ENCODE measurements at regions of chr5 and their contacts with region 1.

Region 1: DNA sequence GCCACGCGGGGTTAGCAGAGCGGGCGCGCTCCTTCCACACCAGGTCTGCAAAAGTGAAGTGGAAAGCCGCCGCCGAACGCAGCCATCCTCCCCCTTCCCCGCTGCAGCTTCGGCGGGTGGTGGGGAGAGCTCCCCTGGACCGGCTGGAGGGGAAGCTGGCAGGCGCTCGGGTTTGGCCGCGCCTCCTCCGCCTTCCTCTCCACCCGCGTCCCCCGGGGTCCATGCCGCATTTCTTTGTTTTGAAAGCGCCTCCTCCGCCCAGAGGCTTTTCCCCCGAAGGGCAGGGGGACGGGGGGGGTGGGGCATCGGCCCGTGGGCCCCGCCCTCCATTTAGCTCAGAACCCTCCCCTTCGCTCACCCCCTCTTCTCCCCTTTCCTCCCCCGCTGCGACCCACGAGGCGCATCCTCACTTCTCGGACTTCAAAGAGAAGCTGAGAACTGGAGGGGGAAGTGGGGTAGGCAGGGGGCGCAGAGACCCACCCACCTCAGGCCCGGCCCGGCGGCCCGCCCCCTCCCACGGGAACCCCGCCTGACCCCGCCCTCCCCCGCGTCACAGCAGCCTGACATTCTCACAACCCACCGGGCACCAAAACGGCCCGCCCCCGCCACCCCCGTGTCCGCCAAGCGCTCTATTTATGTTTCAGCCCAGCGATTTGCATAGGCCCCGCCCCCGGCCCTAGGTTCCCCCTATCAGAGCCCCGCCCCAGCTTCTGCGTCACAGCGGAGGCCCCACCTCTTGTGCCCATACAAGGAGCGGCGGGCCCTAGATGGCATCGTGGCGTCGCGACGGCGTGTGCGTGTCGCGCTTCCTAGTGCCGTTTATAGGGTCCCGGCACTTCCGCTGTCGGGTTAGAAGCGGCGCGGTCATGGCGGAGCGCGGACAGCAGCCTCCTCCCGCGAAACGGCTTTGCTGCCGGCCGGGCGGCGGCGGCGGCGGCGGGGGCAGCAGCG is at the start of gene ZSWIM6:
- DNase-seq: peak; percentile 98 to 100 (median 99)

Region 2: GRCh38 chr5:61139100-61139873 is 192.4 kb before region 1 on chr5:
- intact Hi-C with region 1: no loop called
- DNase-seq: no peak

Region 3: DNA sequence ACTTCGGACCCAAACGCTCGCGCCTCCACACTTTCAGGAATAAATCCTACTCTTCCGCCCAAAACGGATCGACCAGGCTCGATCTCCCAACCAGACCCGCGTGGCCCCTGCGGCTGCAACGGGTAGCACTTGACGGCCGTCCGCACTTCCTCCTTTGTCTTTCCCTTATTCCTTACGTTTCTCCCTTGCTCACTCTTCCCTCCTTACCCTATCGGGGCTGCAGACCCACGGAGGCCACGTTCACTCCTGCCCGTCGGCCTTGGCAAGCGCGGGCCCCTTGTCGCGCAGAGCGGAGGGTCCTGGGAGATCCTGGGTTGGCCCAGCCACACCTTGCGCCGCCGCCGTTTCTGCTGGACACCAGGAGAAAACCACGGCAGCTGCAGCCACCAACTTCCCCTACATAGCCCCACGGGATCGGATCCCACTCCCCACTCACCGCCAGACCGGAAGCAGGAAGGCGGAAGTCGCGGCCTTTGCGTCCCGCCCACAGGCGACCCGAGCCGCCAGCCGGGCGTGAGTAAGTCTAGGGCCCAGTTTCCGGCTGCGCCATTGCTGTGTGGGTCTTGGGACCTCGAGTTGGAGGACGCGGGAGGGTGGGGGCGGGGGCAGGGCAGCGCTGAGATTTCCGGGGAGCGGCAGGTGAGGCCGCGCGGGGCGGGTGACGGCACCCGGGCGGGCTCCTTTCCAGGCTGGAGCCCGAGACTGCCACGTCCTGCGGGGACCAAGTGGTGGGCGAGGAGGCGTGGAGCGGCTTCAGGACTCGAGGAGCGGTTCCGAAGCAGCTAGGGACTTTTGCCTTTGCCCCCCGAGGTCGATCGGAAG is 169.5 kb before region 1 on chr5 and contains the start of gene SMIM15:
- intact Hi-C with region 1: loop called (anchors 5 kb)
- DNase-seq: peak; percentile 75 to 98 (median 84)

Region 4: GRCh38 chr5:61171479-61171878 is 160.2 kb before region 1 on chr5:
- intact Hi-C with region 1: loop called (anchors 5 kb)
- DNase-seq: no peak

Region 5: DNA sequence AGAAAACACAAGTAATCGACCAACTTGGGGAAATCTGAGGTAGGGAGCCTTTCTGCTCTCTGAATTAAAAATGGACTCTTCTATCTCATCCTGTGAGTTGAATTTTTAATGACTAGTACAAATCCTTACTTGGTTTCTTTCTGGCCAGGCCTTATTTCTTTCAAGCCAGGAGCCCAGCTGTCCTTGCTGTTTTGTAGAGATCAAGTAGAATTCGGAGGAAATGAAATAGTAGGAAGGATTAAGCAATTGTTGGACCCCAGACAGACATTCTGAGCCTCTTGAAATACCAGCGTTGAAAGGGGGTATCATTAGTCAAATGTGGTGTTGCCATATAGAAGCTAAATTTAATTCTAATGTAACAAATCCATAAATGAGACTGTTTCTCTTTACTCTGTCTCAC is 115.7 kb before region 1 on chr5:
- intact Hi-C with region 1: no loop called
- DNase-seq: no peak

Region 6: DNA sequence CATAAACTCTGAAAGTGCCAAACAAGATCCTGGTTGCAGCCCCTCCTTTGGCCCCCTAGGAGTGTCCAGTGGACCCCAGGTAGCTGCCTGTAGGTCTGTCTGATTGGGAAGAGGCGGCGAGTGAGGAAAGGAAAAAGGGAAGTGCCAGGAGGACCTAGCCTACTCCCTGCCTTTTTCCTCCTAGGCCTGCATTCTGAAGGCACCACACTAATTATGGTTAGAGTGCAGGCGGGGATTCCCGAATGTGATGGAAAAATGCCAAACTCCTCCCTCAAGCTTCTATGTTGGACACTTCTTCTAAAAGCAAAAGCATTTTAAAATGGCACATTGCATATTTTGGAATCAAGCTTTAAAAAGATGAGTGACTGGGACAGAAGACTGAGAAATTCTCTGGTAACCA is 86.2 kb before region 1 on chr5:
- intact Hi-C with region 1: no loop called
- DNase-seq: peak in 1 of 10 donors; percentile 52

Region 7: GRCh38 chr5:61408476-61409168 is 76.9 kb after region 1 on chr5:
- intact Hi-C with region 1: loop called (anchors 5 kb)
- DNase-seq: peak; percentile 93 to 99 (median 98)

Region 8: DNA sequence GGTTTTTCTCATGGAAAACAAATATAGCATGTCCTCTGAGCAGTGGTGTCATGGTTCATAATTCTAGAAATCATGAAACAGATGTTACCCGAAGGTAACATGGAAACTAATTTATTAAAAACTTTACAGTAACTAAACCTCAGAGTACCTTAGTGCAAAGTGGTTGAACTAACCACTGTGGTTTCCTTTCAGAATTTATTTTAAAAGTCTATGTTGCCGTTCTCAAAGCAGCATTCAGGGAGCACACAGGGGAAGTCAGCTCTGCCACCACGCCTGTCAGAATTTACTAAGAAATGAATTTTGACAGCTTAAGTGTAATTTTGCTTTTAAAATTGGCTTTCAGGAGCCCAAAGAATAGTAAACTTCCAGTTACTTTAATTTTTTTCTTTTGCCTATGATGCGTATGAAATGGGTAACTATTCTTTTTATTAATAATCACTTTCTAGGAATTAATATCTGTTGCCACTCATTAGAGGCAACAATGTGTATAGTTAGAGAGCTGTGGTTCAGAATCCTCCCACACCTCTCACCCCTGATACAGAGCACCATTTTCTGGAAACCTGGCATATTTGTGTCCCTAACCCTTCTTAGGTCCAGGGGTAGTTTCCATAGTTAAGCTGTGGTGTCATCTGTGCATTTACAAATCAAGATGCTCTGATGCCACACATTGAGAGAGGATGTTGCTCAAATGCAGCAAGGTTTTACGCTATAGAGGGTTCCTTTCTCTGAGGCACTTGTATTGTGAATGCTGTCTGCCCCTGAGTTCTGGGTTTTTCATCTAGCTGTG is 203.0 kb after region 1 on chr5:
- intact Hi-C with region 1: loop called (anchors 10 kb)
- DNase-seq: no peak

Region 9: GRCh38 chr5:61603211-61603908 is 271.7 kb after region 1 on chr5:
- intact Hi-C with region 1: loop called (anchors 5 kb)
- DNase-seq: peak; percentile 59 to 96 (median 74)

Region 10: GRCh38 chr5:61817472-61818326 is 486.0 kb after region 1 on chr5:
- intact Hi-C with region 1: loop called (anchors 5 kb)
- DNase-seq: peak; percentile 49 to 94 (median 69)